Dorsolateral prefrontal cortex (tissue), 120 donors: ENCODE measurements at regions of chr11 and their contacts with region 1.

Region 1: DNA sequence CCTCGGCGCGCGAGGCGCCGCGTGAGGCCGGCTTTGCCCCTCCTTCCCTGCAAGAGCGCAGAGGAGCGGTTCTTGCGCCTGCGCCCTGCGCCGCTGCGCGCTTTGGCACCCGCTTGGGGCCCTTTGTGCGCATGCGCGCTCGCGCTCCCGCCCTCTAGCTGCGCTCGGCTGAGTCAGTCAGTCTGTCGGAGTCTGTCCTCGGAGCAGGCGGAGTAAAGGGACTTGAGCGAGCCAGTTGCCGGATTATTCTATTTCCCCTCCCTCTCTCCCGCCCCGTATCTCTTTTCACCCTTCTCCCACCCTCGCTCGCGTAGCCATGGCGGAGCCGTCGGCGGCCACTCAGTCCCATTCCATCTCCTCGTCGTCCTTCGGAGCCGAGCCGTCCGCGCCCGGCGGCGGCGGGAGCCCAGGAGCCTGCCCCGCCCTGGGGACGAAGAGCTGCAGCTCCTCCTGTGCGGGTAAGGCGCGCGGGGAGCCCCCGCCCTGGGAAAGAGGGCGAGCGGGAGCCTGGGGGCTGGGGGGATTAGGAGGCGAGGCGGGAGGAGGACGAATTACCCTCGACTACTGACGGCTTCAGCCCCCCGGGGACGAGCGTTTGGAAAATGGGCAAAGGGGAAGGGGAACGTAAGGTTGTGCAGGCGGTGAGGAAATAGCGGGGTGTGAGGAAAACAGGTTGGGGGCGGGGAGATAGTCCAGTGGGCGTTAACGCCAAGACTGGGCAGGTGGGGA is at the start of gene RTN3:
- DNase-seq: peak; percentile 86 to 99 (median 94)
- H3K4me3 ChIP-seq: peak within 1 kb of the TSS; percentile 62 to 99 (median 90)
- H3K27ac ChIP-seq: peak within 1 kb of the TSS; percentile 86 to 99 (median 97)
- H3K27me3 ChIP-seq: no peaks in the 10 kb centered on the region
- CTCF ChIP-seq: peak in 55 of 56 donors; percentile 33 to 86 (median 67)
- total RNA-seq, gene RTN3: 243 to 1,054 (median 793) TPM

Region 2: DNA sequence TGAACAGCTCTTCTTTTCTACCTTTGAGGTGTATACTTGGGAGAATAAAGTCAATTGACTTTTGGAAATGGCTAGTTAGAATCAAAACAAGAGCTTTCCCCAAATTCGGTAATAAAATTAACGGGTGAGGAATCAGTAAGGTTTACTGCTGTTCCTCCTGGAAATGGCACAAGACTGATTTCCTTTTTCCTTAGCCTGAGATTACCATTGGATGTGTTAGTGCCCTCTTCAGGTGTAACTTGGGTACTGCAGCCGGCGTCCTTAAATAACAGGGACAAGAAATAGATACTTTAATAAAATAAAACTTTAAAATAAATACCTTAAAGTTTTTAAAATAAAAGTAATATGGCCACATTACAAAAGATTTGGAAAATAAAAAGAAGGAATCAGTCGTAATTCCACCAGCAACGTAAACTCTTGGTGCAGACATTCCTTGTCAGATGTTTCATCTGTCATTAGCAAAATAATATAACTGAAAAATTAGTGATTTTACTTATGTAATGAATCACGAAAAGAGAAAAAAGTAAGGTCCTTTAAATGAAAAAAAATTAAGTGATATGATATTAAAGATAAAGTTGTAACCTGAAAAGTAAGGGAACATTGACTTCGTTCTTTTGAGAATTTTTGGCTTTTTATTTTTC is 57.4 kb after region 1 on chr11:
- intact Hi-C with region 1: loop called in 1 of 2 experiments (anchors 5 kb)
- DNase-seq: peak; percentile 56 to 90 (median 66)
- H3K4me3 ChIP-seq: peak overlapping the region in 4 of 59 donors; percentile 2 to 36 (median 21)
- H3K27ac ChIP-seq: peak overlapping the region in 8 of 59 donors; percentile 4 to 53 (median 22)
- H3K27me3 ChIP-seq: no peaks in the 10 kb centered on the region
- CTCF ChIP-seq: peak; percentile 90 to 99 (median 96)

Region 3: GRCh38 chr11:63762654-63763495 is 81.4 kb after region 1 on chr11:
- intact Hi-C with region 1: loop called (anchors 5 to 10 kb)
- DNase-seq: peak in 8 of 10 donors; percentile 40 to 72 (median 52)
- H3K4me3 ChIP-seq: peak overlapping the region; percentile 36 to 79 (median 65)
- H3K27ac ChIP-seq: peak overlapping the region in 53 of 59 donors; percentile 10 to 86 (median 64)
- H3K27me3 ChIP-seq: no peaks in the 10 kb centered on the region
- CTCF ChIP-seq: peak in 26 of 56 donors; percentile 5 to 41 (median 22)